RWPE1 (cell line): ENCODE measurements at regions of chr1 and their contacts with region 1.

Region 1: DNA sequence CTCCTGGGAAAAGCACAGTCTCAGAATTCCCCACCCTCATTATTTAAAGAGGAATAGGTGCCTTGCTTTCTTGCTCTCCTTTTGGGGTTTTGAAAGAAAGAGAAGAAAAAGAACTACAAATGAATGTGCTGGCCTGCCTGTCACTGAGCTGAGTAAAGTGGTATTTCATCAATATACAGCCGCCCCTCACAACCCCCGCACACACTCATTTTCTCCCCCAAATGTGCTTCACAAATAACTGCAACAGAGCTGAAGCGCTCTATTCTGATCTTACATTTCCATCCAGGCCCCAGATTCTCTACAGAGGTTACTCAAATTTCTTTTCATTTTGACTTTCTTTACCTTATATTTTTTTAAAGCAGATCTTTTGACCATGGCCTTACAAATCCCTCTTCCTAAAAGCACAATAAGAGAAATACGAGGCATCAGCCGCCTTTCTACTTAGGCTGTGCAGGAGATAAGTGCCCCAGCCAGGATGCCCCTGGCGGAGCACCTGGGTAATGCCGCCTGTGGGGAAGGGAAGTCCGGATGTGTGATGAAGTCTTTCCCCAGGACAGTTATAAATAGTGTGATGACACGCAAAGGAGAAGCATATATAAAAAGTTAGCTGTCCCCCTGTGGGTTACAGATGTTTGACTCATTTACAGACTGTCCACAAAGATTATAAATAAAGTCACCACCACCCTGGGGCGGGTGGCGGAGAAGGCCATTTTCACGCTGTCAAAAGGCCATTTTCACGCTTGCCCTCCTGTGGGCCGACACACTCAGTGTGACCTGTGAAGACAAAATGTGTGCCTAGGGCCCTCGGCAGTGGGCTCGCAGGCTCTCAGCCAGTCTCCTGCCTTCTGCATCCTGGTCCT is 6.5 kb downstream of the KCNN3 start:
- DNase-seq: peak; percentile 47
- H3K27ac ChIP-seq: no peak overlapping the region
- CTCF ChIP-seq: peak; percentile 32

Region 2: GRCh38 chr1:154773551-154773950 is 90.0 kb before region 1 on chr1:
- CTCF ChIA-PET with region 1: no interaction called
- POLR2A ChIA-PET with region 1: interaction called, 14 read pairs
- DNase-seq: no peak
- H3K27ac ChIP-seq: no peak overlapping the region
- CTCF ChIP-seq: no peak